Heart left ventricle (tissue), 16 donors: ENCODE measurements at regions of chr14 and their contacts with region 1.

Region 1: DNA sequence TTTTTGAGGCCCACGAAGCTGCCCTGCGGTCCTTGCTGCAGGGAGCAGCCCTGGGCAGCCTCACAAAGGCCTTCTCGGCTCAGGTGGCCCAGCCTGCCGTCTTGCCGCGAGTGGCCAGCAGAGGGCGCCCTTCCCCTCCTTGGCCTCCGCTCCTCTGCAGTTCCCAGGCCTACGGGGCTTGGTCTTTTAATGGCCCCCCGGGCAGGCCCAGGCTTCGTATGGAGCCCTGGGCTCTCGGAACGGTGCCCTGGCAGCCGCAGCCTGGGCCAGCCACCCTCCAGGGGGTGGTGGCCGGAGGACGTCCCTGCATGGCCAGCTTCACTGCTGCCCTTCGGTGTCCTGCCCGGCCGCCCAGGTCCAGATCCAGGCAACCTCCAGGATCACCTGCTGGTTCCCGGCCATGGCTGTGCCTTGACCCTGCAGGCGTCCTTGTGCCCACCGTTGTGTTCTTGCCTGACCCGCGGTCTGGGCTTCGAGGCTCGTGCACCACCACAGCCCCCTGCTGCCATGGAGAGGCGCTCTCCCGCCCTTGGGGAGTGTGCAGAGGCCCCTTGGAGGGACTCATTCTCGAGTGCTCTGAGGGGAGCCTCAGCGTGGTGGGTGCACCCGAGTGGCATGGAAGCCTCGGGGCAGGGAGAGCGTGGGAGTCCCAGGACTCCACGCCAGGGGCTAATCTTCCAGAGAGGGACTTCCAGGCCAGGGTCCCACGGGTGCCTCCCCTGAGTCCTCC is 9.4 kb downstream of the ASPG start:
- DNase-seq: peak in 3 of 5 donors; percentile 38 to 74 (median 56)
- ATAC-seq: peak; percentile 27 to 62 (median 59)
- H3K4me3 ChIP-seq: no peak overlapping the region
- H3K27ac ChIP-seq: no peak overlapping the region
- H3K4me1 ChIP-seq: peaks cover 0 to 6% (median 0%) of the 10 kb centered on the region in 12 donors
- H3K27me3 ChIP-seq: peaks cover 0 to 16% (median 0%) of the 10 kb centered on the region in 9 donors
- CTCF ChIP-seq: peak; percentile 77 to 96 (median 85)
- POLR2A ChIP-seq: no peak

Region 2: DNA sequence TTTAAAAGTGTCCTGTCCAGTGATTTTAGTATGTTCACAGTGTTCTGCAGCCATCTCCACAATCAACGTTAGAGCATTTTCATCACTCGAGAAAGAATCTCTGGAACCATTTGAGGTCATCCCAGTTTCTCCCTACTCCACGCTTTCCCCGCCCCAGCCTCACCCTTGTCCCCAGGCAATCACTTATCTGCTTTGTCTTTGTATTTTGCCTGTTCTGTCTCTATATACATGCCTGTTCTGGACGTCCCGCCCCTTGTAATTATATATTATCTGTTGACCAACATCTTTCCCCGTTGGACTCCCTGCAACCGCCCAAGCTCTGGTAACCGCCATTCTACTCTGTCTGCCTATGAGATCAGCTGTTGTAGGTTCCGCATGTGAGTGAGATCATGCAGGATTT is 30.9 kb before region 1 on chr14:
- intact Hi-C with region 1: no loop called
- DNase-seq: no peak
- ATAC-seq: no peak
- H3K4me3 ChIP-seq: no peak overlapping the region
- H3K27ac ChIP-seq: no peak overlapping the region
- H3K4me1 ChIP-seq: no peaks in the 10 kb centered on the region
- H3K27me3 ChIP-seq: peaks cover 0 to 13% (median 0%) of the 10 kb centered on the region in 9 donors
- CTCF ChIP-seq: no peak
- POLR2A ChIP-seq: no peak

Region 3: GRCh38 chr14:104118009-104118844 is 23.4 kb after region 1 on chr14:
- intact Hi-C with region 1: no loop called
- DNase-seq: peak in 3 of 5 donors; percentile 14 to 54 (median 19)
- ATAC-seq: no peak
- H3K4me3 ChIP-seq: peak overlapping the region in 1 of 12 donors; percentile 13
- H3K27ac ChIP-seq: no peak overlapping the region
- H3K4me1 ChIP-seq: peaks cover 0 to 18% (median 4%) of the 10 kb centered on the region in 12 donors
- H3K27me3 ChIP-seq: peaks cover 19 to 81% (median 39%) of the 10 kb centered on the region in 9 donors
- CTCF ChIP-seq: no peak
- POLR2A ChIP-seq: no peak

Region 4: DNA sequence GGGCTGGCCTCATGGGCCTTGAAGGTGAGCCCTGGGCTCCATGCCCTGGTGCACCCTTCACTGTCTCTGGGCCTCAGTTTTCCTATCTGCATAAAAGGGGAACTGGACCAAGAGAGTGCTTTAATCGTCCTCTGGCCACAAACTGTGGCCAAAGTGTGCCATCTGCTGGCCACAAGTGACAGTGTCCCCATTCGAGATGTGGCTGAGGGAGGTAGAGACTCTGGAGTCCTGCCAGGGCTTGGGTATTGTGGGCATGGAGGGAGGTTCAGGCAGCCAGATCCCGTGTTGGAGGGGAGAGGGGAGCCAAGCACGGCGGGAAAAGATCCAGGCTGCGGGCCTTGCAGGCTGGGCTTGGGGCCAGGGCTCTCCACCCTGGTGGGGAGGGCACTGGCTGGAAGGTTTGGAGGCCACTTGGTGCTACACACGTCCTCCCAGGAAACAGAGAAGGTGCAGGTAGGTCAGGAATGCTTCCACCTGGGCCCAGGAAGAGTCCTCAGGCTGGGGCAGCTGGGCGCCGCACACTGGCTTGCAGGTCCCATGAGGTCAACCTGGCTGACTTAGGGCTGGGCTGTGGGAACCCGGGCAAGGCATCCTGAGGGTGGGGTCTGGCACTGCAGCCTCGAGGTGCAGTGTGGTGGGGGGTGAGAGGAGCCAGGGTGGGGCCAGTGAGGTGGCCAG is 36.2 kb after region 1 on chr14:
- intact Hi-C with region 1: loop called in 1 of 10 experiments (anchors 5 kb)
- DNase-seq: peak; percentile 66 to 81 (median 70)
- ATAC-seq: peak; percentile 59 to 80 (median 71)
- H3K4me3 ChIP-seq: no peak overlapping the region
- H3K27ac ChIP-seq: no peak overlapping the region
- H3K4me1 ChIP-seq: peaks cover 0 to 13% (median 5%) of the 10 kb centered on the region in 12 donors
- H3K27me3 ChIP-seq: peaks cover 0 to 32% (median 14%) of the 10 kb centered on the region in 9 donors
- CTCF ChIP-seq: peak; percentile 37 to 74 (median 65)
- POLR2A ChIP-seq: no peak

Region 5: DNA sequence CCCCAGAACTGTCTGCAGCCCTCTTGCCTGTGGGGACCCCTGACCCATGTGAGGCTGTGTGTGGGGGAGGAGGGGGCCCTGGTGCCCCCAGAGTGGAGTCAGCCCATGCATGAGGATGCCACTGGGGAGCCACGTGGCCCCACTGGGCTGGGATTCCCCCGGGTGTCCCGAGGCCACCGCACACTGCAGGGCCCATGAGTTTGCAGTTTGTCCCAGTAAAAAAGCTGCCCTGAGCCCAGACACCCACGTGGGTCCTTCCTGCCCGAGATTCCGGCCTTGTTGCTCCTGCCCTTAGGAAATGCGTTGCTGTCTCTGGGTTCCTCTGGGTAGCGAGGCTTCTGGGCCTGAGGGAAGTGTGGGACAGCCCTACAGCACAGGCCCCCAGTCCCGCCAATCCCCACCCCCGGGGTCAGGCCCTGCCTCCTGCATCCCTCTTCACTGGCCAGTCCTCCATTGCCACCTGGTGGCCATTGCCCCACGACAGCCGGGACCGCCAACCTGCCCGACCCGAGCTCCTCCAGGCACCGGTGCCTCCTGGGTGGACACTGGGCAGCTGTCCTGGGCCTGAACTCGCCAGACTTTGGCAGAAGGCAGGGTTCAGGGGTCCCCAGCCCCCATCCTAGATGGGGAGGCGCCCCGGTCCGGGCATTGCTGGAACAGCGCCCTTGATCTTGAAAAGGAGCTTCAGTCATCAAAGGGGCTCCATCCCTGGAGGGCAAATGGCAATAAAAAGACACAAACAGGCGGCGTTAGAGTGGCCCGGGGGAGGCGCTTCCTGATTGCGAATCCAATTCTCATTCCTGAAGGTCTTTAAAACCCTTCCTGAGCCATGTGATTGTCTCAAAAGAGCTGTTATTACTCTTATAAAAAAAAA is 469.1 kb after region 1 on chr14:
- intact Hi-C with region 1: loop called in 1 of 10 experiments (anchors 5 kb)
- DNase-seq: peak; percentile 70 to 86 (median 78)
- ATAC-seq: peak; percentile 44 to 88 (median 80)
- H3K4me3 ChIP-seq: no peak overlapping the region
- H3K27ac ChIP-seq: no peak overlapping the region
- H3K4me1 ChIP-seq: peaks cover 0 to 23% (median 12%) of the 10 kb centered on the region in 12 donors
- H3K27me3 ChIP-seq: peaks cover 0 to 44% (median 4%) of the 10 kb centered on the region in 9 donors
- CTCF ChIP-seq: peak; percentile 67 to 91 (median 86)
- POLR2A ChIP-seq: no peak

Region 6: GRCh38 chr14:104639889-104640548 is 545.1 kb after region 1 on chr14:
- intact Hi-C with region 1: loop called in 1 of 10 experiments (anchors 5 kb)
- DNase-seq: peak in 4 of 5 donors; percentile 43 to 63 (median 53)
- ATAC-seq: peak; percentile 54 to 89 (median 82)
- H3K4me3 ChIP-seq: no peak overlapping the region
- H3K27ac ChIP-seq: no peak overlapping the region
- H3K4me1 ChIP-seq: peaks cover 0 to 18% (median 0%) of the 10 kb centered on the region in 12 donors
- H3K27me3 ChIP-seq: peaks cover 0 to 27% (median 3%) of the 10 kb centered on the region in 9 donors
- CTCF ChIP-seq: peak; percentile 83 to 95 (median 89)
- POLR2A ChIP-seq: no peak